Aorta (tissue), 5 donors: ENCODE measurements at regions of chr2 and their contacts with region 1.

Region 1: GRCh38 chr2:46967990-46968647 is 52.5 kb upstream of the MCFD2 start:
- DNase-seq: peak; percentile 93
- ATAC-seq: peak; percentile 92
- H3K4me3 ChIP-seq: no peak overlapping the region
- H3K27ac ChIP-seq: peak overlapping the region; percentile 47 to 92
- H3K4me1 ChIP-seq: peaks cover 4 to 6% of the 10 kb centered on the region in 2 donors
- H3K27me3 ChIP-seq: no peaks in the 10 kb centered on the region

Region 2: DNA sequence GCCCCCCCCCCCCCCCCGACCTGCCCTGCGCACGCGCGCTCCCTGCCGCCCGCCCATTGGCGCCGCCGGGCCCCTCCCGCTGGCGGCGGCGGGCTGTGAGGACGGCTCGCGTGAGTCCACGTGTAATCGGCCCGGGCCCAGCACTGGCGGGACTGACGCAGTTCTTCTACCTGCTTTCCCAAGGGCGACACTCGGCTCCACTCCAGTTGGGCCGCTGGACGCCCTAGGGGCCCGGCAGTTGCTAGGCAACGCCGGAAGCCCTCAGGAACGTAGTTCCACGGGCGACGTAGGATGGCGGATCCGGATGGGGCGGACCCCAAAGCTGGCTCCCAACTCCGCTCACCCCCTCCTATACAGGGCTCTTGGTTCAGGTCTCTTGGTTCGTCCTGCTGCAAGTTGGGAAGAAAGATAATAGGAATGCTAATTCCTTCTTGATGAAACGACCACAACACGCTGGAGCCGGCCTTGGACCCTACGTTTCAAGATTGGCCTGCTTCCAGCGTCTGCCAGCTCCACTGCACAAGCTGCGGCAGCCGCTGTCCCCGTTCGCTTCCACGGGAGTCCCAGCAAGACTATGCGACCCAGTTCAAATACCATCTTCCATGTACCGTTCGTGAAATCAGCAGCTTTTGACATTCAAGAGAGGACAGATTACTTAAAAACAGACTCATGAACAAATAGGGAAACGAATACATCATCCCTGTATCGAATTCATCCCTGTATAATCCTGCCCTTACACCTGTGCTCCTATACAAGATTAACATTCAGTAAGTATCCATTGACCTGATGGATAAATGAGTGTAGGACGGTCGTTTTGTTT is 52.1 kb before region 1 on chr2:
- intact Hi-C with region 1: loop called in 1 of 2 experiments (anchors 5 kb)
- DNase-seq: peak; percentile 94 to 97
- ATAC-seq: peak; percentile 95
- H3K4me3 ChIP-seq: peak overlapping the region; percentile 71 to 78
- H3K27ac ChIP-seq: peak overlapping the region; percentile 7 to 84
- H3K4me1 ChIP-seq: peaks cover 0 to 8% of the 10 kb centered on the region in 2 donors
- H3K27me3 ChIP-seq: no peaks in the 10 kb centered on the region

Region 3: DNA sequence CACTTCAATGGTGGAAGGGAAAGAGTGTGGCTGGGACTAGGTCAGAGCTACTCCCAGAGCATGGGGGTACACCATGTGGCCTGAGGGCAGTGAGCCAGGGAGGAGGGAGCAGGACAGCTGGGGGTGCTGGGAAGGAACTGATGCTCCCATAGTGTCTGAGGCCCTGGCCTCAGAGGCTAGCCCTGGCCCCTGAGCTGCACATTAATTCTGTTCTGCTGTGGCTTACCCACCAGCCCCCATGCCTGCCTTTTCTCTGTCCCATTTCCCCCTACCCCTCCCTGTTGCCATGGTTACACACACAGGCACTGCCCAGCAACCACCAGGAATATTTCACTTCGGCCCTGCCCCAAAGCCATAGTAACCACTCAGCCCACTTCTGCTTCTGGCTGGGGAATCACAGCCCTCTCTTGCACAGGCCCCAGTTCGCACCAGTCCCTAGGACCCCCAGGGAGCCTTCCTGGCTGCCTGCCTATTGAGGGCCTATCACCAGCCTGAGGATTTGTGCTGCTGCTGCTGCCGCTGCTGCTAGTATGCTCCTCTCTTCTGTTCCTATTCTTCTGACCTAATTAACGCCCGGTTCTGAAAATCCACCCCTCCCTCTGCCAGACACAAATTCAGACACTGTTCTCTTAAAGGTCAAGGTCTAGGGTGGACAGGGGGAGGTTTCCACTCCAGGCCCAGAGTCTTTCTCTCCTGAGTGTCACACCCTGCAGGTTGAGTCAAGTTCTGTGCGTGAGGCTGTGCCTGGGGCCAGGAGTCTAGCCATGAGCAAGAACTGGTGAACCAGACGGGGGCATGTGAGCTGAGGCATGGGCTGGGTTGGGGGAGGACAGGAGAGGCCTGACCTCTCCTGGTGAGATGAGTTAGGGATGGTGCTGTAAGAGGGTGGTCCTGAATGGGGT is 34.6 kb after region 1 on chr2:
- intact Hi-C with region 1: no loop called
- DNase-seq: peak in 1 of 2 donors; percentile 69
- ATAC-seq: peak; percentile 37
- H3K4me3 ChIP-seq: no peak overlapping the region
- H3K27ac ChIP-seq: peak overlapping the region in 1 of 2 donors; percentile 4
- H3K4me1 ChIP-seq: peaks cover 0 to 4% of the 10 kb centered on the region in 2 donors
- H3K27me3 ChIP-seq: no peaks in the 10 kb centered on the region

Region 4: GRCh38 chr2:47250630-47251403 is 282.7 kb after region 1 on chr2:
- intact Hi-C with region 1: no loop called
- DNase-seq: no peak
- ATAC-seq: no peak
- H3K4me3 ChIP-seq: no peak overlapping the region
- H3K27ac ChIP-seq: no peak overlapping the region
- H3K4me1 ChIP-seq: no peaks in the 10 kb centered on the region
- H3K27me3 ChIP-seq: no peaks in the 10 kb centered on the region